Cardiac septum (tissue), 1 donor: ENCODE measurements at regions of chr4 and their contacts with region 1.

Region 1: GRCh38 chr4:18593445-18594002 is 572.0 kb upstream of the LCORL start:
- DNase-seq: no peak

Region 2: DNA sequence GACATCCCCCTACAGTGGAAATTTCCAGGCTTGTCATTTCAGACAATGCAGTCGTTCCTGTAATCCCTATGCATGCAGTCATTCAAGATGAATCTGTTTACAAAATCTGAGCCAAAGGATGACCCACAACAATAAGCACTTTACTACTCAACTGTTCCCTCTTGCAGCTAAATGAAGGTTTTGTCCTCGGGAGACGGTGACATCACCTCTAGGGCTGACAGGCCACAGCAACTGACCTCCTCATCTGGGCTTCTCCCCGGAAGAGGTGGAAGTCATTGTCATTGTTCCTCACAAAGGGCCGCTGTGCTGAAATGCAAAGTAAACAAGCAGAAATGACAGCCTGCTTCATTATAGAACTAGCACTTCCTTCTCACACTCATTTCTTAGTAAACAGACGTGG is 1049.3 kb before region 1 on chr4:
- intact Hi-C with region 1: loop called (anchors 5 kb)
- DNase-seq: no peak

Region 3: DNA sequence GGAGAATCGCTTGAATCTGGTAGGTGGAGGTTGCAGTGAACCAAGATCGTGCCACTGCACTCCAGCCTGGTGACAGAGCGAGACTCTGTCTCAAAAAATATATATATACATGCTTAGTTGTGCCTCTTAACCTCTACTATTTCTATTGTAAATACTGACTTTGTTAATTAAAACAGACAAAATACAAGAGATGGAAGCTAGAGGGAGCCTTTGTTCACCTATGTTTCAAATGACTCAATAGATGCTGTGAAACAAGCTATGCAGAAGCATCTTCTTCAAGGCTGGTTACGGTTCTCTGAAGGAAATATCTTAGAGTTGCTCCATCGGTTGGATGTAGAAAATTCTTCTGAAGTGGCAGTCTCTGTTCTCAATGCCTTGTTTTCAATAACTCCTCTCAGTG is 776.5 kb before region 1 on chr4:
- intact Hi-C with region 1: loop called (anchors 5 kb)
- DNase-seq: no peak

Region 4: DNA sequence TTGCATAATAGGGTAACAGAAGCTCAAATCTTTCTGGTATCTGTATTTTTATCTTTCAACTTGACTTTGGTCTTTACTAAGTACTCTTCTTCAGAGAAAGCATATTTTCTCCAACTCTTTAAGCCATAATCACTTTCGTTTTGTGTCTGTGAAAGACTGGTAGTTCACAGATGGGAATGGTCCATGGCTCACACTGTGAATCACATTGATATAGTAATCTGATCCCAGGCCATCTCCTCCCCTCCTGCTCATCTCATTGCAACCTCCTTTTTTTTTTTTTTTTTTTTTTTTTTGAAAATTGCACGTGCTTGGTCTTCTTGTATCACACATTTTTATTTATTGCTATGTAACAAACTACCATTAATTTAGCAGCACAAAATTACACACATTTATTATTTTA is 963.6 kb after region 1 on chr4:
- intact Hi-C with region 1: no loop called
- DNase-seq: no peak